AG04449 (cell line): ENCODE measurements at regions of chr16 and their contacts with region 1.

Region 1: GRCh38 chr16:67928561-67929364 is 2.9 kb downstream of the CTRL start:
- DNase-seq: no peak
- H3K4me3 ChIP-seq: no peak overlapping the region
- CTCF ChIP-seq: peak; percentile 94

Region 2: GRCh38 chr16:67917852-67918236 is 10.9 kb before region 1 on chr16:
- CTCF ChIA-PET with region 1: interaction called, 14 read pairs
- POLR2A ChIA-PET with region 1: interaction called, 9 read pairs
- DNase-seq: peak; percentile 44
- H3K4me3 ChIP-seq: no peak overlapping the region; the same call in 1 of the 2 replicates
- CTCF ChIP-seq: no peak

Region 3: DNA sequence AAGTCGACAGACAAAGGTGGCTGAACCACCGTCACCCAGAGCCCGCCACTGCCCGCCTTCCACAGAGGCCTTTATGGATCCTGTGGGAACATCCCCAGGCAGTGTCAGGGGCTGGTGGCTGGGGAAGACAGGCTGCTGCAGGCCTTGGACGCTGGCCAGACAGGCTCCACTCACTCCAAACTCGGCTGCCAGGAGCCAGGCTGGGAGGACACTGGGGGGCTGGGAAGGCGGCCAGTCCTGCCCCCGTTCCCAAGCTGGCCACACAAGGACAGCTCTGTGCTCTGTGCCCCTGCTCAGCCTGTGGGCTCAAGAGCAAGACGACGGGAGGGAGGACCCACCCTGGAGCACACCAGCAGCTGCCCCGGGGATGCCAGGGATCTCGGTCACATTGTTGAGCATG is 22.7 kb after region 1 on chr16:
- CTCF ChIA-PET with region 1: no interaction called
- POLR2A ChIA-PET with region 1: no interaction called
- DNase-seq: no peak
- H3K4me3 ChIP-seq: no peak overlapping the region
- CTCF ChIP-seq: no peak